ENCODE measurements at regions of chr2 and their contacts with region 1.

Region 1: GRCh38 chr2:37653805-37654378 is 17.6 kb downstream of the CDC42EP3 start:
- DNase-seq: no peak
- H3K4me3 ChIP-seq: no peak overlapping the region
- H3K27ac ChIP-seq: peak overlapping the region; percentile 54
- H3K27me3 ChIP-seq: no peaks in the 10 kb centered on the region
- CTCF ChIP-seq: no peak

Region 2: GRCh38 chr2:37610638-37611289 is 43.1 kb before region 1 on chr2:
- CTCF ChIA-PET with region 1: no interaction called
- POLR2A ChIA-PET with region 1: no interaction called
- DNase-seq: no peak
- H3K4me3 ChIP-seq: no peak overlapping the region
- H3K27ac ChIP-seq: no peak overlapping the region
- H3K27me3 ChIP-seq: no peaks in the 10 kb centered on the region
- CTCF ChIP-seq: no peak

Region 3: GRCh38 chr2:37809931-37810570 is 156.2 kb after region 1 on chr2:
- CTCF ChIA-PET with region 1: interaction called, 11 read pairs
- POLR2A ChIA-PET with region 1: no interaction called
- DNase-seq: no peak
- H3K4me3 ChIP-seq: no peak overlapping the region
- H3K27ac ChIP-seq: no peak overlapping the region
- H3K27me3 ChIP-seq: no peaks in the 10 kb centered on the region
- CTCF ChIP-seq: no peak